PC-3 (cell line): ENCODE measurements at regions of chr1 and their contacts with region 1.

Region 1: DNA sequence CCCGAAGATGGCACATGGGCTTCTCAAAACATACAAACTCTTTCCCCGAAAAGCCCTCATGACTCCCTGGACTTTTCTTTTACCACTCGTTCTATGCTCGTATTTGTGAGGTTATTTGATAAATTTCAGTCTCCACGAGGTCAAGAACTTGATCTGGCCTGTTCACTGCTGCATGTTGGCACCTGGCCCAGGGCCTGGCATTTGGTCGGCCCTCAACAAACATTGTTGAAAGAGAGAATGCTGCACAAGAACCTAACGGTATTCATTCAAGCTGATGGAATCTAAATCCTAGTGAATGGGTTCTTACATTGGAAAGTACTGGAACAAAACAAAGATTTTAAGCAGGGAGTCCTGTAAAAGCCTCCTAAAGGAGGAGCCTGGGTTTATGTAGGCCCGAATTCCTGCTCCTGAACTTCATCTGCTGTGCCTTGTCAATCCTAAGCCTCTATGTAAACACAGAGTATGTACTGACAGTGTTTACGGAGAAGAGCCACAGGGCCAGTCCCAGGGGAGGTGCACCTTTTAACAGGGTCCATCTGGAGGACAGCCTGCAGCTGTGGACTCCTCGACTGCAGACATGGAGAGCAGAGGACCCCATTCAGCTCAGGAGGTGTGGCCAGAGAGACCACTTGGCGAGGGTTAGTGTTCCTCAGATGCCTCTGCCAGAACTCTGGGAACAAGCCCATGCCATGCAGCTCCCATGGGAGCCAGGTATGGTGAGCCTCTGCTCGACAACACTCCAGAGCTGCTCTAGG is 46.9 kb downstream of the L1TD1 start:
- DNase-seq: peak; percentile 35
- ATAC-seq: peak; percentile 36; the same call in 1 of the 2 replicates
- H3K4me3 ChIP-seq: no peak overlapping the region
- H3K27ac ChIP-seq: no peak overlapping the region
- H3K4me1 ChIP-seq: peaks cover 30% of the 10 kb centered on the region
- H3K27me3 ChIP-seq: no peaks in the 10 kb centered on the region
- CTCF ChIP-seq: no peak

Region 2: DNA sequence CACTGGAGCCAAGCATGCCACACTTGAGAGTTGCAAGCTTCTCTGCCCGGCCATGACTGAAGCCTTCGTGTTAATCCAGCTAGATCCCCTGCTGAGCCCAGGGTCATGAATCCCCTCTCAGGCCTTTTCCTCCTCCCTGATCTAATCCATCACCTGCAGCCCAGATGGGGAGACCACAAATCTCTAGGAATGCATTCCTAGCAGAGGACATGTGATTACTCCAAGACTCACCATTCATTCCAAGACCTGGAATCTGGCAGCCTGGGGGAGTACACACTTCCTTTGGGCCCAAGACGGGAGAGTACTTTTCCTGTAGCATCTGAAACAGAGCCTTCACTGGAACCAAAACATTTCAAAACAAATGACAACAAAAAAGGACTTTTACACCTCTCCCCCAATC is 1428.5 kb before region 1 on chr1:
- CTCF ChIA-PET with region 1: interaction called, 11 read pairs
- POLR2A ChIA-PET with region 1: no interaction called
- intact Hi-C with region 1: no loop called
- DNase-seq: no peak
- ATAC-seq: no peak
- H3K4me3 ChIP-seq: no peak overlapping the region
- H3K27ac ChIP-seq: no peak overlapping the region
- H3K4me1 ChIP-seq: no peaks in the 10 kb centered on the region
- H3K27me3 ChIP-seq: peaks cover 51% of the 10 kb centered on the region; the same call in 1 of the 2 replicates
- CTCF ChIP-seq: no peak